ENCODE measurements at regions of chr11 and their contacts with region 1.

Region 1: DNA sequence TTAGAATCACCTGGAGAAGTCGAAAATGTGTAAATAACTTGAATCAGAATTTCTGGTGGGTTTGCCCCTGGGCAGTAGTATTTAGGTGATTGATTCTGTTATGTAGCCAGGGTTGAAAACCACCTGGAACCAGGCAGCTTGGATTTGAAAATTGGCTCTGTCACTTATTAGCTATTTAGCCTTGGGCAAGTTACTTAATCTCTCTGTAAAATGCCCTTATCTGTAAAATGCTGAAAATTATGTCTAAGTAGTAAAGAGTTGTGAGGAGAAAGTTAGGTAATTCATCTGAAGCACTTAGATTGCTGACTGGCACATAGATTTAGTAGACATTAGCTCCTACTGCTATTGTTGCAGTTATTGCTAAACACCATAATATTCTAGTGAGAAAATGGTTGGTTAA is 49.3 kb downstream of the PPME1 start:
- DNase-seq: no peak
- H3K4me3 ChIP-seq: no peak overlapping the region
- H3K27ac ChIP-seq: no peak overlapping the region
- H3K4me1 ChIP-seq: no peaks in the 10 kb centered on the region
- H3K27me3 ChIP-seq: no peaks in the 10 kb centered on the region
- CTCF ChIP-seq: no peak
- POLR2A ChIP-seq: no peak

Region 2: GRCh38 chr11:76184551-76184993 is 1964.2 kb after region 1 on chr11:
- intact Hi-C with region 1: loop called (anchors 5 kb)
- DNase-seq: no peak
- H3K4me3 ChIP-seq: no peak overlapping the region
- H3K27ac ChIP-seq: no peak overlapping the region
- H3K4me1 ChIP-seq: no peaks in the 10 kb centered on the region
- H3K27me3 ChIP-seq: no peaks in the 10 kb centered on the region
- CTCF ChIP-seq: no peak
- POLR2A ChIP-seq: no peak

Measured in uterus (tissue), 4 donors.